Activated T-helper 1 cell treated with anti-CD3 and anti-CD28 coated beads, Interleukin-12 subunit alpha, Interleukin-12 subunit beta, Interleukin-2, Interleukin-4 antibody, amounts not matched to agents 30 ng/mL and 10 ng/mL and 1 ng/mL, durations not matched to agents 14 hours and 24 hours and 36 hours (primary cell): ENCODE measurements at regions of chr5 and their contacts with region 1.

Region 1: GRCh38 chr5:14628346-14628745 is 36.2 kb upstream of the OTULIN start:
- DNase-seq: peak; percentile 41
- H3K4me3 Mint-ChIP-seq: no peak overlapping the region
- H3K27ac Mint-ChIP-seq: no peak overlapping the region
- H3K4me1 Mint-ChIP-seq: no peaks in the 10 kb centered on the region
- H3K27me3 Mint-ChIP-seq: peaks cover 3% of the 10 kb centered on the region

Region 2: GRCh38 chr5:14208071-14209021 is 420.0 kb before region 1 on chr5:
- intact Hi-C with region 1: no loop called
- DNase-seq: no peak
- H3K4me3 Mint-ChIP-seq: no peak overlapping the region
- H3K27ac Mint-ChIP-seq: peak overlapping the region; percentile 55
- H3K4me1 Mint-ChIP-seq: peaks cover 54% of the 10 kb centered on the region
- H3K27me3 Mint-ChIP-seq: peaks cover 6% of the 10 kb centered on the region

Region 3: DNA sequence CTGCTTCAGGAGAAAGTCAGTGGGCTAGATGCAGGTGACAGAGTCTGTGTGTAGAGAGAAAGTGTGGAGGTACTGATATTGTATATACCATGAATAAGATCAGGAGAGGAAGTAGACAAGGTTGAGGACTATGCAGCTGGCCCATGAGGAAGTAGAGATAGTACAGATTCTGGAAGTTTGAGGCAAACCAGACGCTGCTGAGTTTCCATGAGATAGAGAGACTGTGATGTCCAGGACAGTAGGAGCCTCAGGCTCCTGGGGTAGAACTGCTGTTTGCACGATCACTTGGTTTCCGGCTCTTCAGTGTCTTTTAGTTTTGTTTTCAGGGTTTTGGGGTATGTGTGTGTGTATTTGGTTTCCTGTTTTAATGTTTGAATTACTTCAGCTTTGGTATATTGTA is 33.2 kb before region 1 on chr5:
- intact Hi-C with region 1: loop called (anchors 1 kb)
- DNase-seq: peak; percentile 49
- H3K4me3 Mint-ChIP-seq: peak overlapping the region; percentile 78
- H3K27ac Mint-ChIP-seq: peak overlapping the region; percentile 98
- H3K4me1 Mint-ChIP-seq: peaks cover 76% of the 10 kb centered on the region
- H3K27me3 Mint-ChIP-seq: no peaks in the 10 kb centered on the region

Region 4: GRCh38 chr5:14757850-14758249 is 129.5 kb after region 1 on chr5:
- intact Hi-C with region 1: no loop called
- DNase-seq: no peak
- H3K4me3 Mint-ChIP-seq: no peak overlapping the region
- H3K27ac Mint-ChIP-seq: no peak overlapping the region
- H3K4me1 Mint-ChIP-seq: peaks cover 8% of the 10 kb centered on the region
- H3K27me3 Mint-ChIP-seq: no peaks in the 10 kb centered on the region

Region 5: GRCh38 chr5:14908195-14908594 is 279.8 kb after region 1 on chr5:
- intact Hi-C with region 1: no loop called
- DNase-seq: no peak
- H3K4me3 Mint-ChIP-seq: no peak overlapping the region
- H3K27ac Mint-ChIP-seq: no peak overlapping the region
- H3K4me1 Mint-ChIP-seq: no peaks in the 10 kb centered on the region
- H3K27me3 Mint-ChIP-seq: peaks cover 6% of the 10 kb centered on the region